WTC11 (cell line): ENCODE measurements at regions of chr22 and their contacts with region 1.

Region 1: DNA sequence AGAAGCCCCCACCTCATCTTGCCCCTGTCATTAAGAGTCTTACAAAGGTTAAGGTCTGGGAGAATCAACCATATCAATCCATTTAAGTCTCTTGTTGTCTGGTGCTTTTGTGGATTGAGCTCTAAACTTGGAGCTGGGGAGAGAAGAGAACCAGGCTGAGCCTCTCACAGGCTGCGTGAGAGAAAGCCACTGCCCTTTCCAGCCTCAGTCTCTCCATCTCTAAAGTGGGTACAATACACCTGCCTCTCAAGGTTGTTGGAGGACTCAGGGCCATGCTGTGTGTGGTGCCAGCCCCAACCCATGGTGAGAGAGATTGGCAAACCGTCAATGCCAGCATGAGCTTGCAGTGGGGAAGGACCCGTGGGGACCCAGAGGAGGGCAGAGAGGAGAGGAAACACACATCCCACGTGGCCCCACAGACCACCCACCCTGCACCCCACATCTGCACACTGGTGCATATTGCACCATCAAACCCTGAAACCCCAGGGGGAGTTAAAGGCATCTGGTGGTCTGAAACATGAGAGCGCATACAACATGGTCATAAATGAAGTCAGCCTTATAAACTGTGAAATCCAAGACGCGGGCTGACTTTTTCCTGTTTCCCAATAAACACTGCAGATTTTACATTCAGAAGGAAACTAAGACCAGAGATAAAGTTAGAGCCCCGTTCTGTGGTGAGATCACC is 27.5 kb upstream of the FBLN1 start:
- DNase-seq: no peak
- ATAC-seq: no peak
- H3K4me3 Mint-ChIP-seq: no peak overlapping the region
- H3K27ac Mint-ChIP-seq: no peak overlapping the region
- H3K4me1 Mint-ChIP-seq: peaks cover 19% of the 10 kb centered on the region
- H3K27me3 Mint-ChIP-seq: no peaks in the 10 kb centered on the region; the same call in 1 of the 2 replicates
- CTCF ChIP-seq: no peak

Region 2: DNA sequence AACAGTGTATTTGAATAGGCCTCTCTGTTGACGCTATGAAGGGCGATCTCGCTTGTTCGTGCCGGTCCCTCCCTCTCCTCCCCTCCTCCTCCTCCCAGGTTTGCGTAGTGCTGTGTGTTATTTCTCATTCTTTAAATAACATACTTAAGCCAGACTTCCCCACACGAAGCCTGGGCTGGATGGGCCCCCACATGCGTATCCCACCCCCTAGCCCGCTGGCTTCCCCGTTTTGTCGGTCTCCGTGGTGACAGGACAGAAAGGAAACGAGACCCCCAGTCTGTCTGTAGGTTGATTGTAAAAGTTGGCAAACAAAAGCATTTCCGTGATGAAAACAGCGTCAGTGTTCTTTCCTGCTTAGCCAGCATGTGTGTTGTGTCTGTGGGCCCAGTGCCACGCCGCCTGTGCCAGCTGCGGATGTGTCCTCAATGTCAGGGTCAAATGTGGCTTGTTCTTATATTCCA is 138.2 kb before region 1 on chr22:
- CTCF ChIA-PET with region 1: no interaction called
- POLR2A ChIA-PET with region 1: no interaction called
- DNase-seq: no peak
- ATAC-seq: no peak
- H3K4me3 Mint-ChIP-seq: no peak overlapping the region
- H3K27ac Mint-ChIP-seq: no peak overlapping the region; the same call in 1 of the 2 replicates
- H3K4me1 Mint-ChIP-seq: no peaks in the 10 kb centered on the region
- H3K27me3 Mint-ChIP-seq: no peaks in the 10 kb centered on the region
- CTCF ChIP-seq: no peak

Region 3: GRCh38 chr22:45462034-45462690 is 13.0 kb before region 1 on chr22:
- CTCF ChIA-PET with region 1: interaction called, 12 read pairs
- POLR2A ChIA-PET with region 1: no interaction called
- DNase-seq: peak; percentile 21
- ATAC-seq: peak; percentile 91
- H3K4me3 Mint-ChIP-seq: no peak overlapping the region
- H3K27ac Mint-ChIP-seq: no peak overlapping the region
- H3K4me1 Mint-ChIP-seq: 0 out of 2 replicates have a peak, but pooled peaks cover 2% of the 10 kb centered on the region
- H3K27me3 Mint-ChIP-seq: no peaks in the 10 kb centered on the region
- CTCF ChIP-seq: no peak